ENCODE measurements at regions of chr5 and their contacts with region 1.

Region 1: DNA sequence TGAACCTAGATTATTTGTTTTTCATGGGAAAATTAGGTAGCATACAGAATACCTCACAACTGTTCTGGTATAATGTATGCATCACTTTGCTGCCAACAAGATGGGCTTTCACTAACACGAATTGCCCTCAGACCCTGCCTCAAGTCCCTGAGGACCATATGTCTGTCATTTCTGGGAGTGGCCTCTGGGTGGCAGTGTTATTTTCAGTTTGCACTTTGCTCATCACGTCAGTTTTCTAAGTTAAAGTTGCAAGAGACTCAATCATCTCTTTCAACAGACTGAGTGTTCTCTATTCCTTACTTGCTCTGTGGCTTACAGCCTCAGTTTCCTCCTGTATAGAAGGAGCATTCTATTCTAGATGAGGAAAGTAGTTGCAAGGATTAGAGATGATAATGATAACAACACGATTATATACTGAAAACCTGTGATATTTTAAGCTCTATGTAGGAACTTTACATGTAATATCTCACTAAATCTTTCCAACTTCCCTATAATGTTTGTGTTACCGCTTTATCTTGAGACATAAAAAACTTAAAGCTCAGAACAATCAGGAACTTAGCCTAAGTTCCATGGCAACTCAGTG is 55.7 kb downstream of the TSSK1B start:
- DNase-seq: peak; percentile 8 to 57 (median 41)
- ATAC-seq: peak; percentile 74
- H3K4me3 ChIP-seq: no peak overlapping the region
- H3K4me3 Mint-ChIP-seq: peak overlapping the region; percentile 52 to 78 (median 65)
- H3K27ac ChIP-seq: no peak overlapping the region
- H3K27ac Mint-ChIP-seq: peak overlapping the region in 2 of 9 donors; percentile 8 to 31
- H3K4me1 ChIP-seq: peaks cover 21 to 25% of the 10 kb centered on the region in 2 donors
- H3K4me1 Mint-ChIP-seq: peaks cover 30 to 59% (median 52%) of the 10 kb centered on the region in 7 donors
- H3K27me3 ChIP-seq: no peaks in the 10 kb centered on the region
- H3K27me3 Mint-ChIP-seq: peaks cover 14 to 32% (median 27%) of the 10 kb centered on the region in 5 donors

Region 2: DNA sequence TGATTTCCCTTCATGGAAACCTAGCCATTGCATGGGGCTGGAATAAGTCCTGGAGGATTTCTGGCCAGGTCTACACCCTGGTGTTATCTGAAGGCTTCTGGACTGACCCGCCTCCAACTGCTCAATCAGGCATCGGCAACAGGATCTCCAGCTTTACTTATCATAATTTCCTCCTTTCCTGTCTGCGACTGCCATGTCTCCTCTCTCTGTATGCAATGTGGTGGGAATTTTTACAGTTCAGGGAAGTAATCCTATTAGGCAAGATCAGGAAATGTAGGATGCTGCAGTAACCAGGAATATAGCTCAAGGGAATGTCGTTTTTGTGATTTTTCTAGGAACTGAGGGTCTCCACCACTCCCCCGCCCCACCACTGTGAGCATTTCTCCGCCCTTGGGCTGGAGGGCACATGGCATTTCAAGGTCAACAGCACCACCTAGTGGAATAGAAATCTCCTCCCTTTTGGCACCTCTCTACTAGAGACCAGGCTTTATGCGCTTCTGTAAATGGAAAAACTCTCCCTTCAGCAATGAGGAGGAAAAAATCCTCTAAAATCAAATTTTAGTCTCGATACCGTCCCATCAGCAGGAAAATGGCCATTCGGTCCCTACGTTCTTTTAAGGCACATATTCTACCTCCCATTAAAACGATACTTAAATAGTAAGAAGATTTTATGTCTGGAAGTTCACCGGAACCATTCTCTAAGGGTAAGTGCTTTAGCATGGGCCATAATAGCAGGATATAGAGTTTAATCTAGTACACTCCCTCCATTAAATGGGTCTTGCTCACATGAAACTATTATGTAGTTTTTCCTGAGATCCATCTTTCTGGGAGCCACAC is 227.5 kb after region 1 on chr5:
- CTCF ChIA-PET with region 1: interaction called, 3 read pairs
- POLR2A ChIA-PET with region 1: no interaction called
- intact Hi-C with region 1: loop called (anchors 1 kb)
- DNase-seq: peak in 8 of 9 donors; percentile 29 to 68 (median 56)
- ATAC-seq: peak; percentile 89
- H3K4me3 ChIP-seq: no peak overlapping the region
- H3K4me3 Mint-ChIP-seq: no peak overlapping the region
- H3K27ac ChIP-seq: no peak overlapping the region
- H3K27ac Mint-ChIP-seq: no peak overlapping the region
- H3K4me1 ChIP-seq: no peaks in the 10 kb centered on the region
- H3K4me1 Mint-ChIP-seq: peaks cover 4 to 10% (median 6%) of the 10 kb centered on the region in 7 donors
- H3K27me3 ChIP-seq: no peaks in the 10 kb centered on the region
- H3K27me3 Mint-ChIP-seq: peaks cover 13 to 38% (median 27%) of the 10 kb centered on the region in 5 donors

Measured in naive thymus-derived CD4-positive, alpha-beta T cell (primary cell).